Breast epithelium (tissue), 4 donors: ENCODE measurements at regions of chr2 and their contacts with region 1.

Region 1: GRCh38 chr2:66724241-66724640 is 289.3 kb downstream of the MEIS1 start:
- DNase-seq: no peak
- H3K4me3 ChIP-seq: no peak overlapping the region
- H3K27ac ChIP-seq: no peak overlapping the region
- H3K4me1 ChIP-seq: no peaks in the 10 kb centered on the region
- H3K27me3 ChIP-seq: no peaks in the 10 kb centered on the region
- CTCF ChIP-seq: no peak
- POLR2A ChIP-seq: no peak

Region 2: DNA sequence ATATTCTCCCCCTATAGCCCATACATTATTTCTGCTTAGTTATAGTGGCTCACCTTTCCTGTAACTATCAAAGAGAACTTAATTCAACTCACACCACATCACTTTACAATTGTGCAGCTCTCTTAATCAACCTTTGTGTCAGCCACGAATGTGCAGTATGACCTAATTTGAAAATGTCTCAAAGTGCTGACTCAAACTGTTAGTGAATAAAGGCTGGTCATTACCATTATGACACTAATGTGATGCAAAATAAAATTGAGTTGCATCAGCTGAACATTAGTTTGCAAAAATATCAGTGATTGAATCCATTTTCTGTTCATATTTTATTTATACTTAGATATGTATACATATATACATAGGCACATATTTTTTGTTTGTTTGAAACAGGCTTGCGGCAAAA is 37.5 kb before region 1 on chr2:
- intact Hi-C with region 1: loop called (anchors 2 kb)
- DNase-seq: no peak
- H3K4me3 ChIP-seq: no peak overlapping the region
- H3K27ac ChIP-seq: no peak overlapping the region
- H3K4me1 ChIP-seq: no peaks in the 10 kb centered on the region
- H3K27me3 ChIP-seq: no peaks in the 10 kb centered on the region
- CTCF ChIP-seq: no peak
- POLR2A ChIP-seq: no peak